ENCODE measurements at regions of chr12 and their contacts with region 1.

Region 1: GRCh38 chr12:120086801-120087621 is 29.5 kb downstream of the RAB35 start:
- DNase-seq: peak; percentile 99
- H3K4me3 ChIP-seq: peak overlapping the region; percentile 54 to 63
- H3K27ac ChIP-seq: peak overlapping the region; percentile 74 to 75
- H3K4me1 ChIP-seq: peaks cover 0 to 14% of the 10 kb centered on the region in 2 experiments; a peak in 1 of 4 replicates
- H3K27me3 ChIP-seq: no peaks in the 10 kb centered on the region
- CTCF ChIP-seq: peak; percentile 92
- EP300 ChIP-seq: peak in 1 of 2 experiments; percentile 57; a peak in 2 of 4 replicates
- RAD21 ChIP-seq: peak; percentile 73

Region 2: DNA sequence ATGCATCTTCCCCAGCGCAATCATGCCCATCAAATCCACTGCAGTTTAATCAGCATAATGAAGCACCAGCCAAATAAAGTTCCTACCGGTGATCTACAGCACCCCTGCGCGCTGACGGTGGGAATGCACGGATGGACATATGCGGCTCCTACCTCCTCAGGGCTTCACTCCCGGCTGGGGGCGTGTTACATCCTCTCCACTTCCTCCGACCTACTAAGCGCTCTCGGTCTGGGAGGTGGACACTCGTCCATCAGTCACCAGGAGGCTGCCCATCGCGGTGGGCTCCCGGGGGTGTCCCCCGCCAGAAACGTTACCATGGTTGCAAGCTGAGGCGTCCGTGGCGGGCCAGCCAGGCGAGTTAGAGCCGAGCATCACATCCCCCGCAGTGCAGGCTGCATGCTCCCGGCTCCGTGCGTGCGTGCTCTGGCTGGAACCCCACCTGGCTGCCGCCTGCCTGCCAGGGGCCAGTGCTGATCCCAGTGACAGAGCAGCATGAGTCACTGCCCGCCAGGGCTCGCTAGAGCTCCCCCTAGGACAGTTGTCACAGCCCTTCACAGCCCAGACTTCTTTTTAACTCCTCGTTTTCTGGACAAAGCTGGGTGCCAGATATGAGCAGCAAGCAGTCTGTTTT is 282.9 kb before region 1 on chr12:
- CTCF ChIA-PET with region 1: no interaction called
- POLR2A ChIA-PET with region 1: no interaction called
- DNase-seq: peak; percentile 86
- H3K4me3 ChIP-seq: peak overlapping the region; percentile 17 to 19; a peak in 2 of 4 replicates
- H3K27ac ChIP-seq: no peak overlapping the region
- H3K4me1 ChIP-seq: peaks cover 7 to 8% of the 10 kb centered on the region in 2 experiments; a peak in 3 of 4 replicates
- H3K27me3 ChIP-seq: no peaks in the 10 kb centered on the region
- CTCF ChIP-seq: peak; percentile 54
- EP300 ChIP-seq: no peak
- RAD21 ChIP-seq: peak; percentile 66

Region 3: DNA sequence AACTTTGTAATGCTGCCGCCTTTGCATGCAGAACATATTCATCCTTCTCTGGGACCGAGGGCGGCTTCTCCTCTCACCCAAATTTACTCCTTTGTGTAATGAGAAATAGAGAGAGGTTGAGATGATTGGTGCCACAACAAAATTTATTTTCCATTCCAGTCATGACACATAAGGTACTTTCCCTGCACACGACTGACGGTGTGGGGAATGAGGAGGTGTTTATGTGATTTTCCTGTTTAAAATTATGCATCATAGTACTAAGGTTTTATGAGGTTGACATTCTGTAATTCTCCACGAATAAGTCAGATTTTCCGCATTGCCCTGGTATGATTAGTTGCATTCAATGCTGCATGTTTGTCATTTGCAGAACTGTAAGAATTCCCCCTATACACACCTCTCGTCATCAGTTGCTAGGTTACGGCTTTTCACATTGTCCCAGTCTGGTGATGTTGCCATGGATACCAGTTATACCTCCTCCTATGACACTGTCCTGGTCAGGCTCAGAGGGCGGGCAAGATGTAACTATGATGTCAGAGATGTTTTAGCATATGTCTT is 74.9 kb before region 1 on chr12:
- CTCF ChIA-PET with region 1: no interaction called
- POLR2A ChIA-PET with region 1: no interaction called
- DNase-seq: peak; percentile 66
- H3K4me3 ChIP-seq: no peak overlapping the region
- H3K27ac ChIP-seq: no peak overlapping the region
- H3K4me1 ChIP-seq: no peaks in the 10 kb centered on the region
- H3K27me3 ChIP-seq: no peaks in the 10 kb centered on the region
- CTCF ChIP-seq: no peak
- EP300 ChIP-seq: no peak
- RAD21 ChIP-seq: no peak

Region 4: GRCh38 chr12:120100435-120101029 is 13.5 kb after region 1 on chr12:
- CTCF ChIA-PET with region 1: interaction called, 10 read pairs
- POLR2A ChIA-PET with region 1: no interaction called
- DNase-seq: peak; percentile 86
- H3K4me3 ChIP-seq: no peak overlapping the region
- H3K27ac ChIP-seq: peak overlapping the region in 1 of 2 experiments; percentile 85; a peak in 2 of 4 replicates
- H3K4me1 ChIP-seq: peaks cover 0 to 46% of the 10 kb centered on the region in 2 experiments; a peak in 1 of 4 replicates
- H3K27me3 ChIP-seq: no peaks in the 10 kb centered on the region
- CTCF ChIP-seq: no peak
- EP300 ChIP-seq: no peak; a peak in 1 of 4 replicates
- RAD21 ChIP-seq: peak; percentile 24; the same call in 1 of the 2 replicates

Measured in SK-N-SH (cell line).